HEK293 (cell line): ENCODE measurements at regions of chr7 and their contacts with region 1.

Region 1: GRCh38 chr7:12607134-12607533 is 36.6 kb downstream of the SCIN start:
- H3K4me3 ChIP-seq: no peak overlapping the region
- H3K27ac ChIP-seq: no peak overlapping the region
- H3K4me1 ChIP-seq: no peaks in the 10 kb centered on the region
- CTCF ChIP-seq: no peak

Region 2: GRCh38 chr7:12623897-12624498 is 16.9 kb after region 1 on chr7:
- CTCF ChIA-PET with region 1: interaction called, 10 read pairs
- POLR2A ChIA-PET with region 1: no interaction called
- H3K4me3 ChIP-seq: no peak overlapping the region
- H3K27ac ChIP-seq: no peak overlapping the region
- H3K4me1 ChIP-seq: no peaks in the 10 kb centered on the region
- CTCF ChIP-seq: no peak

Region 3: GRCh38 chr7:12757443-12757842 is 150.3 kb after region 1 on chr7:
- CTCF ChIA-PET with region 1: no interaction called
- POLR2A ChIA-PET with region 1: no interaction called
- H3K4me3 ChIP-seq: no peak overlapping the region
- H3K27ac ChIP-seq: no peak overlapping the region
- H3K4me1 ChIP-seq: no peaks in the 10 kb centered on the region
- CTCF ChIP-seq: no peak

Region 4: DNA sequence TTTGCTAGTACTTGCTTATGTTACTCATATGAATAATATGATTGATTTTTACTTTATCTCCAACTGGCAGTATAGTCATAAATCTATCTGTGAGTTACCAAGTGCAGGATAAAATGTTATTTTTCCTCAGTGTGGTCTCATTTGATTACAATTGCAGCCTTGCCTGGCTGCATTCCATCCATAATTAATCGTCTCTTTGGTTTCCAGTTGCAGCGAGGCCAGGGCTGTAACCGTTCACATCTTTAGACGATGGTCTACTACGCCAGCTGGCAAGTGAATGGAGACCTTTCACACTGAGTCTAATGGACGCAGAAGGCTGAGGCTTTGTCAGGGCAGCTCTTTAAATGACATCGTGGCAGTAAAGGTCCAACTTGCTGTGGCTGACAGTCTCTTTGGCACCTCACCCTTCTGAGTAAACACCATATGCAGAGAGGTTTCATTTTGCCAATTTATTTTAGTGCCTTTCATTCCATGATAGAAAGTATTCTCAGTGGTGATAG is 164.3 kb after region 1 on chr7:
- CTCF ChIA-PET with region 1: no interaction called
- POLR2A ChIA-PET with region 1: no interaction called
- H3K4me3 ChIP-seq: no peak overlapping the region
- H3K27ac ChIP-seq: peak overlapping the region; percentile 0; the same call in 1 of the 2 replicates
- H3K4me1 ChIP-seq: peaks cover 18% of the 10 kb centered on the region
- CTCF ChIP-seq: no peak